HEK293 (cell line): ENCODE measurements at regions of chr1 and their contacts with region 1.

Region 1: DNA sequence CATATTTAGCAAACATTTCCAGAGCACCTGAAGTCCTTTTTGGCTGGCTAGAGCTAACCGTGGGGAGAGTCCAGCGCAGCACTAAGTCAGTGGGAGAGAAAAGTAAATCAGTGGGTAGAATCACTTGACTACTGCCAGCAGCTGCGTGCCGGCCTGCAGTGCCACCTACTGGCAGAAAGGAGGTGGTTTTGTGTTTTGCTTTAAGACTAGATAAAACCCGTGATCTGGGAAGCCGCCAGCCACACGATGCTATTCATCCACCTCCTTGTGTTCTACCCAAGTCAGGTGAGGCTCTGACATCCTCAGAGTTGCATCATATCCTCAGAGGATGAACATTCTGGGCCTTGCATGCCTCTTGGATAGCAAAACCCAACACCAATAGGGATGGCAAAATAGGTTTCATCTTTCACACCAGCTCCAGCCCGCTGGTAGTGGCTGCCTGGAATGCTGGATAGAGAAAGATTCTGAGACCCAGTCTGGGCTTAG is 14.1 kb upstream of the HEYL start:
- H3K4me3 ChIP-seq: no peak overlapping the region
- H3K27ac ChIP-seq: no peak overlapping the region
- H3K4me1 ChIP-seq: no peaks in the 10 kb centered on the region
- CTCF ChIP-seq: peak; percentile 83

Region 2: DNA sequence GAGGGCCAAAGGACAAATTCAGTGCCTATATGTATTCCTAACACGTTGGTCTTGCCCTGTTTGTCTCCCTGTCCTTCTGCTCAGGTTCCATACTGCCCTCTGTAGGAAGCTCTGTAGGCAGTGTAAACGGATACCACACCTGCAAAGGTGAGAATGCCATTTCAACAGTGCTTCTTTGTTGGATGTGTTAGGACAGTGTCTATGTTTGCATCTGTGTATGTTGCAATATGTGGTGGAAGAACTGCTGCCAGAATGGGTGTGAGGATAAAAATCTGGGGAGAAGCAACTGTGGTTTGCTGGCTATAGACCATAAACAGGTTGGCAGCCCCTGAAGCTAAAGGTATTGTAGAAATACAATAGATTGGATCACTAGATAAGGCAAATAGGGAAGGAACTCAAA is 275.2 kb before region 1 on chr1:
- CTCF ChIA-PET with region 1: no interaction called
- POLR2A ChIA-PET with region 1: no interaction called
- H3K4me3 ChIP-seq: no peak overlapping the region
- H3K27ac ChIP-seq: no peak overlapping the region
- H3K4me1 ChIP-seq: no peaks in the 10 kb centered on the region
- CTCF ChIP-seq: peak; percentile 37; the same call in 1 of the 2 replicates

Region 3: GRCh38 chr1:39525366-39526165 is 128.0 kb before region 1 on chr1:
- CTCF ChIA-PET with region 1: no interaction called
- POLR2A ChIA-PET with region 1: no interaction called
- H3K4me3 ChIP-seq: no peak overlapping the region
- H3K27ac ChIP-seq: no peak overlapping the region
- H3K4me1 ChIP-seq: no peaks in the 10 kb centered on the region
- CTCF ChIP-seq: no peak

Region 4: DNA sequence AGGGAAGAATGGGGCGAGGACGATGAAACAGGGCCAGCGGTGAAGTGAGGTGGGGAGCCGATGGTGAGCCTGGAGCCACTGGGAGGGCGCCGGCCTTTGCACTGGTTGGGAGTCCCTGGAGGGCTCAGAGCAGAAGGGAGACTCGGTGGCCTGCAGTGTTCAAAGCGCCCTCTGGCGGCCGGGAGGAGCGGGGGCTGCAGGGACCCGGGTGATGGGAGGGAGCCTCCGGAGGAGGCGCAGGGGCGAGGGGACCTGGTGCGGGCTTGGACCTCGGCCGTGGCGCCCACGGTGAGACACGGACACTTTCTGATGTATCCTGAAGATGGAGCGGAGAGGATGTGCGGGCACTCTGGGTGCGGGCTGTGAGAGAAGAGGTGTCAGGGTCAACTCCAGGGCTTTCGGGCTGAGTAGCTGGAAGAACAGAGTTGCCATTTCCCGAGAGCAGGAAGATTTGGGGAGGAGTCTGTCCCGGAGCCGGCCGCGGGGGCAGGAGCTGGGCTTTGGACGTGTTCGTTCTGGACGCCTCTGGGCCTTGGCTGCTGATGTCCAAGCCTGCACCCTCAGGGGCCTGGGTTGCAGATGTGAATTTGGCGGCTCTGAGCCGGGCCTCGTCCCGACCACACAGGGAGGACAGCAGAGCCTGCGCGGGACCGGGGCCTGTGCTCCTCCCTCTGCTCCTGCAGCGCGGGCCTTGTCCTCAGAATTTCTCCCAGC is 43.8 kb before region 1 on chr1:
- CTCF ChIA-PET with region 1: interaction called, 350 read pairs
- POLR2A ChIA-PET with region 1: interaction called, 4 read pairs
- H3K4me3 ChIP-seq: no peak overlapping the region
- H3K27ac ChIP-seq: no peak overlapping the region
- H3K4me1 ChIP-seq: no peaks in the 10 kb centered on the region
- CTCF ChIP-seq: peak; percentile 81; the same call in 1 of the 2 replicates

Region 5: DNA sequence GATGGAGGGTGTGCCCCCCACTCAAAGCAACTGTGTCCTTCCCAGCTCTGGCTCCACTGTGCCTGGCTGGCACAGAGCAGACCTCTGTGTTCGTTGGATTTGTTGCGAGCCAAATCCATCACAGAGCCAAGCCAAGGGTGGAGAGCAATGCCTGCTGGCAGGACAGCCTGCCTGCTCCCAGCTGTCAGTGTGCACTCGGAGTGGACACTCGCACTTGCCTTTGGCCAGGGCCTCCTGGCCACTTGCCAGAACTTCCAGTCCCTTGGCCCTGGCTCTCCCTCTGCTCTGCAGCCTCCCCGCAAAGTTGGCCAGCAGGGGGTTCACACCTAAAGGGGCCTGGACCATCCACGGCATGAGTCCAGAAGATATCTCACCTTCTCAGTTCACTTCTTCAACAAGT is 30.5 kb before region 1 on chr1:
- CTCF ChIA-PET with region 1: interaction called, 23 read pairs
- POLR2A ChIA-PET with region 1: no interaction called
- H3K4me3 ChIP-seq: no peak overlapping the region
- H3K27ac ChIP-seq: no peak overlapping the region
- H3K4me1 ChIP-seq: no peaks in the 10 kb centered on the region
- CTCF ChIP-seq: no peak

Region 6: DNA sequence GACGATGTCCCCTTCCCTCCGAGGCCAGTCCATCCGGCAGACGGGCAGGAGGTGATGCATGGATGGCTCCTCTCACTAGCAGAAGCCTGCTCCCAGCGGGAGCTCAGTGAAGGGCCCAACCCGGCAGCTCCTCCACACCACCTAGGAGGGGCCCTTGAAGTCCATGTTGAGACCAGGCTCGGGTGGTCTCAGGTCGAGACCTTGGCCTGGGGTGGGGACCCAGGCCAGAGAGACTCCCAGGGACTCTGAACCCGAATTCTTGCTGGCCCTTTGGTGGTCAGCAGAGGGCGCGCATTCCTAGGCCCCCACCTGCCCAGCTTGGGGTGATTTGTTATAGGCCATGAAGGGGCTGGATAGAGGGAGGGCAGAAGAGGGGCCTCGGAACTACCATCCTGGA is 19.0 kb after region 1 on chr1:
- CTCF ChIA-PET with region 1: interaction called, 181 read pairs
- POLR2A ChIA-PET with region 1: interaction called, 3 read pairs
- H3K4me3 ChIP-seq: no peak overlapping the region
- H3K27ac ChIP-seq: no peak overlapping the region
- H3K4me1 ChIP-seq: no peaks in the 10 kb centered on the region; the same call in 1 of the 2 replicates
- CTCF ChIP-seq: no peak; the same call in 1 of the 2 replicates

Region 7: GRCh38 chr1:39691262-39692151 is 37.9 kb after region 1 on chr1 and contains the start of gene HPCAL4:
- CTCF ChIA-PET with region 1: interaction called, 13 read pairs
- POLR2A ChIA-PET with region 1: interaction called, 3 read pairs
- H3K4me3 ChIP-seq: peak within 1 kb of the TSS; percentile 25
- H3K27ac ChIP-seq: no peak within 1 kb of the TSS
- H3K4me1 ChIP-seq: no peaks in the 10 kb centered on the region
- CTCF ChIP-seq: 0 out of 2 replicates have a peak, but pooled peaks have one; percentile 4

Region 8: DNA sequence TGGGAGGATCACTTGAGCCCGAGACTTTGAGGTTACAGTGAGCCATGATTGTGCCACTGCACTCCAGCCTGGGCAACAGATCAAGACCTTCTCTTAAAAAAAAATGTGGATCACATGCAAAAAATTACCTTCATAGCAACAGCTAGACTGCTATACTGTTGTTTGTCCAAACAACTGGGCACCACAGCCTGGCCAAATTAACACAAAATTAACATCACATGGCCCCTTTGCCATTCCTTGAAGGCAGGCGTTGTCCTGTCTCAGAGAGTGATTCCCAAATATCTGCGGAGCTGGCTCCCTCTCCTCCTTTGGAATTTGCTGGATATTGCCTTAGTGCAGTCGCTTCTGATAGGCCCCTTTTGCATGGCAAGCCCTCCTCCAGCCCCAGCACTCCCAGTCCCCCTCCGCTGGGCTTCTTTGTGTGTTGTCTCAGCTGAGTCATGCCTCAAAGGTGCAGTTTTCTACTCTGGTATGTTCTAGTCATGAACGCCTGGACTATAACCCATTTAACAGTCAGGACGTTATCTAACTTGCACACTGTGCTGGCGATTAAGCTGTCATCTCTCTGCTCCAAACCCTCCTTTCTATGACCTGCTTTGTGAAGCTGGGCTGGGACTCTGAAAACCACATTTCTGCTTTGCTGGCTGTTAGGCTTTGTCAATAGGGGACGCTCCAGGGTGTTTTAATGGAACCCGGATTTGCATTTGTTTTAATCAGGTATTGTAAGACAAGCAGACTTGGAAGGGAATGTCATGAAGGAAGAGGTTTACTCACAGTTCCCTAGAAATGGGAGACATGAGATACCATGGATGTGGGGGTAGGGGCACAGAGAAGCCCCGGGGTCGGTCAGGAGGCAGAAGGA is 57.7 kb after region 1 on chr1:
- CTCF ChIA-PET with region 1: interaction called, 11 read pairs
- POLR2A ChIA-PET with region 1: no interaction called
- H3K4me3 ChIP-seq: no peak overlapping the region
- H3K27ac ChIP-seq: no peak overlapping the region
- H3K4me1 ChIP-seq: no peaks in the 10 kb centered on the region
- CTCF ChIP-seq: no peak

Region 9: DNA sequence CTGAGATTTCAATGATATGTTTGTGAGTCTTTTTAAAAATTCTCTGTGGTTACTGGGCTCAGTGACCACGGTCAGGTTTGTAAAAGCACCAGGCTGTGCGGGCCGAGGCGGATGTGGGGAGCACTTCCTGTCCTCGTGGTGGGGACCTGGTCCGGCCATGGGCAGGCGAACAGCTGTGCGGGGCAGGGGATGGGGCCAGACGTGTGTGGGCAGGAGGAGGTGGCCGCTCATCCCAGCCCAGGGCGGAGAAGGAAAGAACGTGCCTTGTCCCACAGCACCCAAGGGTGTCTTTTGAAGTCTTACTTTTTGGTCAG is 122.8 kb after region 1 on chr1:
- CTCF ChIA-PET with region 1: no interaction called
- POLR2A ChIA-PET with region 1: no interaction called
- H3K4me3 ChIP-seq: no peak overlapping the region
- H3K27ac ChIP-seq: no peak overlapping the region
- H3K4me1 ChIP-seq: peaks cover 5% of the 10 kb centered on the region
- CTCF ChIP-seq: no peak